T-cell (primary cell): ENCODE measurements at regions of chr1 and their contacts with region 1.

Region 1: DNA sequence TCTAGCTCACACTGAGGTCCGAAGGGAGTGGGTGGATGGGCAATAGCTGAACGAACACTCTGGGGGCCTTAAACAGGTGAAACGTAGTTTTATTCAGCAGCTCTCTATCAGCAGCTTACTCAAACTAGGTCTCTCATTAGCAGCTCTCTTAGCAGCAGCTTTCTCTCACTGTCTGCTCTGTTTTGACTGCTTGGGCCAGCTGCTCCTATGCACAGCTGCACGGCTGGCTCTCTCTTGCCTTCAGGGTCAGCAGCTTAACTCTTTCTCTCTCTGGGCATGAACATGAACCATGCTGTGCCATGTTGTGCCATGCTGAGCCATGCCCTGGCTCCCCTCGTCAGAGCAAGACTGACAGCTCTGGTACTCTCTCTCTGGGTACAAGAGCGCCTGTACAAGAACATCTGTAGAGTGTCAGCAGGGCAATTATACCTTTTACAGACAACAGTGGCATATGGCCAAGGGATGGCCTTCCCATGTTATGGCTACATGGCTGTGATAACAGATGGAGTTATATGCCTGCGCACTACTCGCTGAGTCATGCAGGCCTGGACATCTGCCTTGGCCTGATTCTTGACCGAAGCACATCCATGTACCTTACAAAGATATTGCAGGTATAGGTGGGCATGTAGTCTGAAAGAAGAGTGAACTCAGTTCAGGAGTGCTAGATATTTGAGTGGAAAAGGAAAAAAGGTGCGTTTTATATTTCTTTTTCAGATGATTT is 152.4 kb downstream of the LEPR start:
- DNase-seq: no peak
- ATAC-seq: no peak
- H3K4me3 ChIP-seq: no peak overlapping the region
- H3K4me3 Mint-ChIP-seq: no peak overlapping the region
- H3K27ac ChIP-seq: no peak overlapping the region
- H3K27ac Mint-ChIP-seq: no peak overlapping the region
- H3K4me1 ChIP-seq: no peaks in the 10 kb centered on the region
- H3K4me1 Mint-ChIP-seq: no peaks in the 10 kb centered on the region
- H3K27me3 ChIP-seq: no peaks in the 10 kb centered on the region
- H3K27me3 Mint-ChIP-seq: no peaks in the 10 kb centered on the region

Region 2: GRCh38 chr1:66478116-66478515 is 905.3 kb after region 1 on chr1:
- CTCF ChIA-PET with region 1: interaction called in 1 of 2 experiments, 10 read pairs
- POLR2A ChIA-PET with region 1: no interaction called
- DNase-seq: no peak
- ATAC-seq: no peak
- H3K4me3 ChIP-seq: no peak overlapping the region
- H3K4me3 Mint-ChIP-seq: no peak overlapping the region
- H3K27ac ChIP-seq: no peak overlapping the region
- H3K27ac Mint-ChIP-seq: no peak overlapping the region
- H3K4me1 ChIP-seq: no peaks in the 10 kb centered on the region
- H3K4me1 Mint-ChIP-seq: no peaks in the 10 kb centered on the region
- H3K27me3 ChIP-seq: peaks cover 0 to 6% of the 10 kb centered on the region in 2 experiments
- H3K27me3 Mint-ChIP-seq: peaks cover 33 to 36% of the 10 kb centered on the region in 2 donors